Activated CD4-positive, alpha-beta T cell treated with anti-CD3 and anti-CD28 coated beads for 36 hours (primary cell): ENCODE measurements at regions of chr2 and their contacts with region 1.

Region 1: DNA sequence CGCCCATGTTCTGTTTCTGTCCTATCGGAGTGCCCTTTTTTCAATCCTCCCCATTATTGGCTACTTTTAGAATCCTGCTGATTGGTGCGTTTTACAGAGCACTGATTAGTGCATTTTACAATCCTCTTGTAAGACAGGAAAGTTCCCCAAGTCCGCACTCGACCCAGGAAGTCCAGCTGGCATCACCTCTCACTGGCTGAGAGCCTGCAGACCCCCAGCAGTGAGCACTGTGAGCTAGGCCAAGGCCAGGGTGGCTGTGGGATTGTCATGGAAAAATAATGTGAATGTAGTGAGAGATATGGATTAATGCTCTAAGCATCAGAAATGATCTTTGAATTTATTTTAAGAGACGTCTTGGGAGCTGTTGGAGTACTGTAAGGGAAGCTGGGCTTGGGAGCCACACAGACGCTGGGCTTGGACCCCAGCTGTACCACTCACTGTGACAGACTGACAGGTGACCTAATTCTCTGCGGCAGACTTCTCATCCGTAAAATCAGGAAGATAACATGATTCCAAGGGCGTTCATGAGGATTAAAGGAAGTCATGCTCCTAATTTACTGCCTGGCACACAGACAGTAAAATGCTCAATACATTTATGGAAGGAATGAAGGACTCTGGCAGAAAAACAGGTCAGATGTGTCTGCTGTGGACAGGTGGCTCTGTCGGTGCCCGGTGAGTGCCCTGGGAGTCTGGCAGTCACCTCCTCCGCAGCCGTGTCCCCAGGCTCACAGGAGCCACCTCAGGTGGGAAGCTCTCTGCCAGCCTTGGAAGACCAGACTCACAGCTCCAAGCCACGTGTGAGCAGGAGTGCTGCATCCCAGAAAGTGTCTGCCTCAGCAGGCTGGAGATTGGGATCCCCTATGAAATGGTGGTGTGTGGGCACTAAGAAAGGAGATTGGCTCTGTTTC is 105.5 kb downstream of the FAM168B start:
- DNase-seq: no peak
- ATAC-seq: no peak
- H3K4me3 Mint-ChIP-seq: no peak overlapping the region
- H3K27ac Mint-ChIP-seq: no peak overlapping the region
- H3K4me1 Mint-ChIP-seq: no peaks in the 10 kb centered on the region
- H3K27me3 Mint-ChIP-seq: no peaks in the 10 kb centered on the region

Region 2: GRCh38 chr2:131168538-131168937 is 180.8 kb after region 1 on chr2:
- CTCF ChIA-PET with region 1: no interaction called
- POLR2A ChIA-PET with region 1: interaction called, 13 read pairs
- intact Hi-C with region 1: no loop called
- DNase-seq: no peak
- ATAC-seq: no peak
- H3K4me3 Mint-ChIP-seq: no peak overlapping the region
- H3K27ac Mint-ChIP-seq: no peak overlapping the region
- H3K4me1 Mint-ChIP-seq: no peaks in the 10 kb centered on the region
- H3K27me3 Mint-ChIP-seq: peaks cover 10% of the 10 kb centered on the region